Panc1 (cell line): ENCODE measurements at regions of chr1 and their contacts with region 1.

Region 1: DNA sequence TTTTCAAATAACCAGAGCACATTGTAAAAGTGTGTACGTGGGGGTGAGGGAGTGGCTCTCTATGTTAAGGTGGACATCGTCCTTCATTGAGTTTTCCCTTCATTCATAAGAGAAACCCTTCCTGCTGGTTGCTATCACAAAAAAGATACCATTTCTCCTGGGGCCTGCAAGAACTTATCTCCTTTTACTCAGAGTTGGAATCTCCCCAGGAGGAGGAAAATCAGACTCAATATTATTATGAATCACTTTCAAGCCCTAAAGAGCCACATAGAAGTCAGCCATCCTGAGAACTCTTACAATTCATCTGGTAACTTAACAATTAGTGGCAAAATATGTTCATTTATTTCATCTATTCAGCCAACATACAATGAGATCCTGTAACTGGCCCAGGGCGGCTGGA is 27.1 kb upstream of the TGFBR3 start:
- DNase-seq: no peak
- ATAC-seq: no peak
- H3K4me3 ChIP-seq: no peak overlapping the region
- H3K27ac ChIP-seq: no peak overlapping the region
- H3K4me1 ChIP-seq: no peaks in the 10 kb centered on the region
- H3K27me3 ChIP-seq: no peaks in the 10 kb centered on the region
- CTCF ChIP-seq: no peak

Region 2: DNA sequence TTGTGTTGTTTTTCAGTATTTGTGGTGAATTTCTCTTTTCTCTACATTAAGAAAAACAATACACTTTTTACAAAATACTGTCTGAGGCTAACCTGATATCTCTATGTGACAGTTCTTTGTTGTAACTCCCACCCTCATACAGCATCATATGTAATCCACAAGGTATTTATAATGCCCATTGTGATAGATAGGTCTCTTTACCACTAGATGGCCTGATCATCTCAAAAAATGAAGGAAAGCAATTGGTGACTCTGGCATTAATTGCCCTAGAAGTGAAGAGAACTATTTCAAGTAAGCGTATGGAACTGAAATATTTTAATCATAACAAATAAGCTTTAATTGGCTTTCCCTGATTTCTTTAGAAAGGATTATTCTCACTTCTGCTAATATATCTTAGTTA is 472.2 kb before region 1 on chr1:
- CTCF ChIA-PET with region 1: interaction called, 10 read pairs
- POLR2A ChIA-PET with region 1: no interaction called
- in situ Hi-C with region 1: no loop called
- intact Hi-C with region 1: no loop called
- DNase-seq: no peak
- ATAC-seq: 0 out of 2 replicates have a peak, but pooled peaks have one; percentile 73
- H3K4me3 ChIP-seq: no peak overlapping the region
- H3K27ac ChIP-seq: no peak overlapping the region
- H3K4me1 ChIP-seq: no peaks in the 10 kb centered on the region
- H3K27me3 ChIP-seq: peaks cover 6% of the 10 kb centered on the region
- CTCF ChIP-seq: peak; percentile 48; the same call in 1 of the 2 replicates

Region 3: GRCh38 chr1:91830242-91831131 is 82.5 kb before region 1 on chr1:
- CTCF ChIA-PET with region 1: no interaction called
- POLR2A ChIA-PET with region 1: no interaction called
- in situ Hi-C with region 1: no loop called
- intact Hi-C with region 1: no loop called
- DNase-seq: no peak
- ATAC-seq: peak; percentile 65
- H3K4me3 ChIP-seq: no peak overlapping the region
- H3K27ac ChIP-seq: peak overlapping the region; percentile 56
- H3K4me1 ChIP-seq: peaks cover 28% of the 10 kb centered on the region
- H3K27me3 ChIP-seq: no peaks in the 10 kb centered on the region
- CTCF ChIP-seq: peak; percentile 57

Region 4: DNA sequence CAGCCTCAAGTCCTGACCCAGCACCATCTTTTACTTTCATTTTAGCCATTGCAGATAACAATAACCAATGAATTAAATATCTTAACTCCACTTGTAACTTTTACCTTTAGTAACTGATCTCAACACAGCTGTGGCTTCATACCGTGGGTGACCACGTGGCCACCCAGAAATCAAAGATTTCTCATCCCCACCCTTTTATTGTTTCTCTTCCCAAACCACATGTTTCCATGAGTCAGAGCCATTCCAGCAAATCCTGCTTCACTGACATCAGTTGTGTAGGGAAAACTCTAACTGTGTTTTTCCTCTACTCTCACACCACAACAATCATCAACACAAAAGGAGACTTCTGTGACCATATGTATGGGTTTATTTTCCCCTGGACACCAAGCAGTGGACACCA is 11.1 kb after region 1 on chr1:
- CTCF ChIA-PET with region 1: interaction called, 15 read pairs
- POLR2A ChIA-PET with region 1: no interaction called
- in situ Hi-C with region 1: no loop called
- intact Hi-C with region 1: no loop called
- DNase-seq: no peak
- ATAC-seq: no peak
- H3K4me3 ChIP-seq: no peak overlapping the region
- H3K27ac ChIP-seq: no peak overlapping the region
- H3K4me1 ChIP-seq: no peaks in the 10 kb centered on the region
- H3K27me3 ChIP-seq: no peaks in the 10 kb centered on the region
- CTCF ChIP-seq: no peak

Region 5: GRCh38 chr1:92136341-92136740 is 223.3 kb after region 1 on chr1:
- CTCF ChIA-PET with region 1: no interaction called
- POLR2A ChIA-PET with region 1: no interaction called
- in situ Hi-C with region 1: no loop called
- intact Hi-C with region 1: no loop called
- DNase-seq: no peak
- ATAC-seq: no peak
- H3K4me3 ChIP-seq: no peak overlapping the region
- H3K27ac ChIP-seq: no peak overlapping the region
- H3K4me1 ChIP-seq: no peaks in the 10 kb centered on the region
- H3K27me3 ChIP-seq: no peaks in the 10 kb centered on the region
- CTCF ChIP-seq: no peak